WTC11 (cell line): ENCODE measurements at regions of chr7 and their contacts with region 1.

Region 1: GRCh38 chr7:18610331-18610948 is 114.9 kb downstream of the HDAC9 start:
- DNase-seq: peak; percentile 12
- ATAC-seq: peak; percentile 91
- H3K4me3 Mint-ChIP-seq: no peak overlapping the region
- H3K27ac Mint-ChIP-seq: no peak overlapping the region
- H3K4me1 Mint-ChIP-seq: peaks cover 23% of the 10 kb centered on the region
- H3K27me3 Mint-ChIP-seq: no peaks in the 10 kb centered on the region
- CTCF ChIP-seq: peak; percentile 53

Region 2: DNA sequence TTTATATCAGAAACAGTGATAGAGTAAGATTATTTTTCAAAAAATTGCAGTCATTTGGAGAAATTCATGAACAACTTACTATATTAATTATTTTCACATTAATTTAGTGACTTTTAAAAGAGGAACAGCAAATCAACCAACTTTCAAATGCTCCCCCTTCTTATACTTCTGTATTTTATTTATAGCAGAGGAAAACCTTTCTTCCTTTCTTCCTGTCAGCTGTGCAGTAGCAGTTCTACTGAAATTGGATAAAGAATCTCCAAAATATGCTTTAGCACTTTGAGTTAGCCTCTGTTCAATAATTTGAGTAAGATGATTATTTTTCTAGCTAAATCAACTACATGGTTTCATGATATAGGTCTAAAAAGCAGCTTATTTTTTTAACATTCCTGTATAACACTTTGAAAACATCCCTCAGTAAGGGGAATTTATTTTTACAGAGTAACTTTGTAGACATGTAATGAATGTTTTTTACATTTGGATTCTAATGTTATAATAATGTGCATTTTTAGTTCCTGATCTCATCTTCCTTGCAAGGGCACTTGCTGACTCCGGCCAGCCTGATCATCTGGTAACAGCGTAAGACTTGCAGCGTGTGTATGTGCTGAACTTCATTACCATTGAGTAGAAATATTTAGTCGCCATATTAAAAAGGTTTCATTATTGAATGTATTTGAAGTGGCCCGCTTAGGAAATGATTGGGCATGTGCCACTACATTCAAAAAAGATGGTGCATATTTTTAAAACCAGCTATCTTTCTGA is 273.2 kb before region 1 on chr7:
- CTCF ChIA-PET with region 1: no interaction called
- POLR2A ChIA-PET with region 1: no interaction called
- DNase-seq: no peak
- ATAC-seq: no peak
- H3K4me3 Mint-ChIP-seq: no peak overlapping the region
- H3K27ac Mint-ChIP-seq: no peak overlapping the region
- H3K4me1 Mint-ChIP-seq: no peaks in the 10 kb centered on the region
- H3K27me3 Mint-ChIP-seq: no peaks in the 10 kb centered on the region
- CTCF ChIP-seq: no peak

Region 3: DNA sequence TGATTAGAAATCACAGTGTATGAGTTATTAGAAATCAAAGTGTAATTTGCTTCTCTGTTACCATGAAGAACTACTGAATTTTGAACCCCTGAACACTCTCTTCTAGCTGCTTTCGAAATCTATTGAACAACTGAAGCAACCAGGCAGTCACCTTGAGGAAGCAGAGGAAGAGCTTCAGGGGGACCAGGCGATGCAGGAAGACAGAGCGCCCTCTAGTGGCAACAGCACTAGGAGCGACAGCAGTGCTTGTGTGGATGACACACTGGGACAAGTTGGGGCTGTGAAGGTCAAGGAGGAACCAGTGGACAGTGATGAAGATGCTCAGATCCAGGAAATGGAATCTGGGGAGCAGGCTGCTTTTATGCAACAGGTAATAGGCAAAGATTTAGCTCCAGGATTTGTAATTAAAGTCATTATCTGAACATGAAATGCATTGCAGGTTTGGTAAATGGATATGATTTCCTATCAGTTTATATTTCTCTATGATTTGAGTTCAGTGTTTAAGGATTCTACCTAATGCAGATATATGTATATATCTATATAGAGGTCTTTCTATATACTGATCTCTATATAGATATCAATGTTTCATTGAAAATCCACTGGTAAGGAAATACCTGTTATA is 55.8 kb after region 1 on chr7:
- CTCF ChIA-PET with region 1: interaction called, 17 read pairs
- POLR2A ChIA-PET with region 1: no interaction called
- DNase-seq: peak; percentile 86
- ATAC-seq: peak; percentile 98
- H3K4me3 Mint-ChIP-seq: no peak overlapping the region
- H3K27ac Mint-ChIP-seq: no peak overlapping the region
- H3K4me1 Mint-ChIP-seq: peaks cover 17% of the 10 kb centered on the region
- H3K27me3 Mint-ChIP-seq: no peaks in the 10 kb centered on the region
- CTCF ChIP-seq: peak; percentile 95

Region 4: DNA sequence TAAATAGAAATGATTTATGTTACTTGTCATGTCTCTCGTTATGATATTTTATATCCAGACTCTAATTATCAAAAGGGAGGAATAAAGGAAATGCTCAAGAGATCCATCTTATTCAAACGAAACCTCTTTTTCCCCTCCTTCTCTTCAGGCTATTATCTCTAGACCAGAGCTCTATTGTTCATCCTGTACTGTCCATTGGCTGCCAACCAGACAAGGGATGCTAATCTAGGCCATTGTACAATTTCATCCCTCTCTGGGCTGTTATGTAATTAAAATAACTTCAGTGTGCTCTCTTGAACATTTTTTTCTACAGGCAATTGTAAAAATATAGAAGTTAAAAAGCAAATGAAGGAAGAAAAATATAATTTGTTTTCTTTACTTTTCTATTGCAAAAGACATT is 105.5 kb after region 1 on chr7:
- CTCF ChIA-PET with region 1: no interaction called
- POLR2A ChIA-PET with region 1: no interaction called
- DNase-seq: no peak
- ATAC-seq: no peak
- H3K4me3 Mint-ChIP-seq: no peak overlapping the region
- H3K27ac Mint-ChIP-seq: no peak overlapping the region
- H3K4me1 Mint-ChIP-seq: no peaks in the 10 kb centered on the region
- H3K27me3 Mint-ChIP-seq: no peaks in the 10 kb centered on the region
- CTCF ChIP-seq: no peak